Breast epithelium (tissue), 4 donors: ENCODE measurements at regions of chr7 and their contacts with region 1.

Region 1: DNA sequence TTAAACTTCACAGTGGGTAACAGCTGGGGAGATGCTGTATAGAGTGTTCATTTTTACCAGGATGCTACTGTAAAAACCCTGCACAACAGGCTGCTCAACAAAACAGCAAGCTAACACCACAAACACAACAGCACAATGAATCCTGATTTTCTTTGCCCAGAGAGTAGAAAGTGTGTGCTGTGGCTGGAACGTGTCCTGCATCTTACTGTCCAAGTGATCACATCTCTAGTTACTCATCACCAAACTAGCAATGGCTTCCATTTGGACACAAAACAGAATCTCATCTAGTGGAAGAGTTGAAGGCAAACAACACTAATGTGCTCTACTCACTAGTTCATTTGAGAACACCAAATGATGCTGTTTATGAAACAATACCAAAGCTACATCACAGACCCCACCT is 121.2 kb downstream of the SLC25A13 start:
- DNase-seq: no peak
- H3K4me3 ChIP-seq: no peak overlapping the region
- H3K27ac ChIP-seq: no peak overlapping the region
- H3K4me1 ChIP-seq: no peaks in the 10 kb centered on the region
- H3K27me3 ChIP-seq: no peaks in the 10 kb centered on the region
- CTCF ChIP-seq: no peak
- POLR2A ChIP-seq: no peak

Region 2: DNA sequence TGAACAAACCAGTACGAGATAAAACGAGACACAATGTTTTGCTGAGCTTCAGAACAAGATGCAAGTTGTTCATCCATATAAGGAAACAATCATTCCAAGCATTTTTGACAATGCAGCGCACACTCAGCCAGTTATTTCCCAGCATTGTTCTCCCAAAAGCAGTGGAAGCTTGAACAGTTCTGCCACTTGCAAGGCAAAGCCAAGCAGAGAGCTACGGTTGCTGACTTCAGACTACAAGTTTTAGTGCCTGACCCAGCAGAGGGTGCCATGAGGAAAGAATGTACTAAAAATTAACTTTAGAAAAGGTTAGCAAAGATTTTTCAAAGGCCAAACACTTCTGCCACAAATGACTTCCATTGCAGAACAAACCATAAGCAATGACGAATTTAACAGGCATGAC is 31.3 kb before region 1 on chr7:
- intact Hi-C with region 1: no loop called
- DNase-seq: no peak
- H3K4me3 ChIP-seq: no peak overlapping the region
- H3K27ac ChIP-seq: no peak overlapping the region
- H3K4me1 ChIP-seq: no peaks in the 10 kb centered on the region
- H3K27me3 ChIP-seq: no peaks in the 10 kb centered on the region
- CTCF ChIP-seq: no peak
- POLR2A ChIP-seq: no peak

Region 3: GRCh38 chr7:96211954-96212353 is 11.2 kb after region 1 on chr7:
- intact Hi-C with region 1: loop called (anchors 1 kb)
- DNase-seq: no peak
- H3K4me3 ChIP-seq: no peak overlapping the region
- H3K27ac ChIP-seq: no peak overlapping the region
- H3K4me1 ChIP-seq: no peaks in the 10 kb centered on the region
- H3K27me3 ChIP-seq: no peaks in the 10 kb centered on the region
- CTCF ChIP-seq: no peak
- POLR2A ChIP-seq: no peak

Region 4: GRCh38 chr7:96441436-96442084 is 240.8 kb after region 1 on chr7:
- intact Hi-C with region 1: no loop called
- DNase-seq: no peak
- H3K4me3 ChIP-seq: no peak overlapping the region
- H3K27ac ChIP-seq: no peak overlapping the region
- H3K4me1 ChIP-seq: no peaks in the 10 kb centered on the region
- H3K27me3 ChIP-seq: no peaks in the 10 kb centered on the region
- CTCF ChIP-seq: no peak
- POLR2A ChIP-seq: no peak